ENCODE measurements at regions of chr17 and their contacts with region 1.

Region 1: DNA sequence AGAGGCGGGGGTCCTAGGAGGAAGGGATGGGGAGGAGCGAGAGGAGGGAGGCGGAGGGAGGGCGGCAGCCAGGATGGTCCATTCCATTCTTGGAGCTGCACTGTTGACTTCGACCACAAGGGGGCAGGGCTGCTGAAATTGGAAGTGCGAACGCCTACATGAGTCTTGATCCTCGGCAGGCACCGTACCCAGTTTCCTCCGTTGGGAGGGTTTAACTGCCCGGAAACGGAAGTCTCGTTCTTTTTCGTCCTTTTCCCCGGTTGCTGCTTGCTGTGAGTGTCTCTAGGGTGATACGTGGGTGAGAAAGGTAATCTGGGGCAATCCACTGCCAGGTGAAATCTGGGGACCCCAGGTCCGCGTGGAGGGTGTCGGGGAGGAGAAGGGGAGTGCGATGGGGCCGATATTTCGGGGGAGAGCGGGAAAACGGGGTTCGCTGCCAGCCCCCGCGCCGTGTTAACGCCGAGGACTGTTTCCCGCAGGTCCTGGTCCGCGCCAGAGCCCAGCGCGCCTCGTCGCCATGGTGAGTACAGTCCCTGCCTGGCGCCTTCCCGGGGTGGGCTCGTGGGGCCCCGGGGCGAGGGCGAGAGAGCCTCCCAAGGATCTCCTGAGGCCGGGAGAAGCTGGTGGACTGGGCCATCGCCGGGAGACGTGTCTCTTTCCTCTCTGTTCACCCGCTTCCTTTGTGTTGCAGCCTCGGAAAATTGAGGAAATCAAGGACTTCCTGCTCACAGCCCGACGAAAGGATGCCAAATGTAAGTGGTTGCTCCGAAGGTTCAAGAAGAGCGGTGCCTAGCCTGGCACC is at the start of gene RPL38:
- DNase-seq: peak; percentile 83 to 95 (median 94)
- ATAC-seq: peak; percentile 98
- H3K4me3 ChIP-seq: peak within 1 kb of the TSS; percentile 89
- H3K4me3 Mint-ChIP-seq: peak within 1 kb of the TSS; percentile 85 to 100 (median 98)
- H3K27ac ChIP-seq: peak within 1 kb of the TSS; percentile 86
- H3K27ac Mint-ChIP-seq: peak within 1 kb of the TSS; percentile 89 to 98 (median 96)
- H3K4me1 ChIP-seq: peaks cover 16 to 20% of the 10 kb centered on the region in 2 donors
- H3K4me1 Mint-ChIP-seq: peaks cover 24 to 49% (median 34%) of the 10 kb centered on the region in 7 donors
- H3K27me3 ChIP-seq: peaks cover 0 to 5% of the 10 kb centered on the region in 2 donors
- H3K27me3 Mint-ChIP-seq: peaks cover 8 to 16% (median 11%) of the 10 kb centered on the region in 5 donors
- total RNA-seq, gene RPL38: 1,097 to 2,553 (median 2,002) TPM

Region 2: DNA sequence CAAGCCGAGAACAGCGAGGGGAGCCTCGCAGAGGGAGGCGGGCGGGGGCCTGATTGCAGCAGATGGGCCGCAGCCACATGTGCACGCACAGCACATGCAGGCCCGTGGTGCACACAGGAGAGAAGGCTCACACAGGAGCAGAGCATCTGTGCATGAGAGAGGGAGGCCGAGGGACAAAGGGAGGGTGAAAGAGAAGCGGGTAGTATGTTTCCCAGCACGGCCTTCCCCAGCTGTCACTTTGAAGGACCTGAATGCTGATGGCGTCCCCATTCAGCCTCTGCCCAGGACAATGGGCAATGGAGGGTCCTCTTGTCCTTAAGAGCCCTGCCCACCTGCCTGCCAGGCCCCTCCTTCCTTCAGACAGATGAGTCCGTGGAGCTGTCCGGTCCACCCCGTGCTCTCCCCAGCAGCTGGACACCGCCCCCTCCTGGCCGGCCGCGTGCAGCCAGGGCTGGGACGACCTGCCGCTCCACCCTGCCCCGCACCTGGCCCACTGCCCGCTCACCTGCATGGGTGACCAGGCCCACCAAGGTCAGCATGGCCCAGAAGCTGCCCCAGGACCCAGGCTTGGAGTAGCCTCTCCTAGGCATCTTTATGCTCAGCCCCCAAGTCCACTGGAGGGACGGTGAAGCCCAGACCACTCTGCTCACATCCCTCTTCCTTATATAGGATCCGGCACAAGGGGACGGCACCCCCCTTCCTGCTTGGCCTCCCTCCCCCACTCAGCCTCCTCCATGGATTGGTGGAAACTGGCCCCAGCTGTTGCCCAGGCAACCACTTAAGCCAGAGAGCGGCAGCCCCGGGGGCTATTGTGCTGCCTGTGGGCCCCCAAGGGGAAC is 157.8 kb after region 1 on chr17 and contains the start of gene BTBD17:
- CTCF ChIA-PET with region 1: interaction called, 3 read pairs
- POLR2A ChIA-PET with region 1: no interaction called
- intact Hi-C with region 1: loop called in 1 of 2 experiments (anchors 2 kb)
- DNase-seq: peak in 3 of 9 donors; percentile 18 to 56 (median 23)
- ATAC-seq: peak; percentile 63
- H3K4me3 ChIP-seq: no peak within 1 kb of the TSS
- H3K4me3 Mint-ChIP-seq: no peak within 1 kb of the TSS
- H3K27ac ChIP-seq: no peak within 1 kb of the TSS
- H3K27ac Mint-ChIP-seq: peak within 1 kb of the TSS in 1 of 9 donors; percentile 78
- H3K4me1 ChIP-seq: no peaks in the 10 kb centered on the region
- H3K4me1 Mint-ChIP-seq: peaks cover 0 to 11% (median 4%) of the 10 kb centered on the region in 7 donors
- H3K27me3 ChIP-seq: peaks cover 0 to under 1% of the 10 kb centered on the region in 2 donors
- H3K27me3 Mint-ChIP-seq: peaks cover 14 to 26% (median 22%) of the 10 kb centered on the region in 5 donors
- total RNA-seq, gene BTBD17: not detected

Measured in naive thymus-derived CD4-positive, alpha-beta T cell (primary cell).